ENCODE measurements at regions of chr22 and their contacts with region 1.

Region 1: DNA sequence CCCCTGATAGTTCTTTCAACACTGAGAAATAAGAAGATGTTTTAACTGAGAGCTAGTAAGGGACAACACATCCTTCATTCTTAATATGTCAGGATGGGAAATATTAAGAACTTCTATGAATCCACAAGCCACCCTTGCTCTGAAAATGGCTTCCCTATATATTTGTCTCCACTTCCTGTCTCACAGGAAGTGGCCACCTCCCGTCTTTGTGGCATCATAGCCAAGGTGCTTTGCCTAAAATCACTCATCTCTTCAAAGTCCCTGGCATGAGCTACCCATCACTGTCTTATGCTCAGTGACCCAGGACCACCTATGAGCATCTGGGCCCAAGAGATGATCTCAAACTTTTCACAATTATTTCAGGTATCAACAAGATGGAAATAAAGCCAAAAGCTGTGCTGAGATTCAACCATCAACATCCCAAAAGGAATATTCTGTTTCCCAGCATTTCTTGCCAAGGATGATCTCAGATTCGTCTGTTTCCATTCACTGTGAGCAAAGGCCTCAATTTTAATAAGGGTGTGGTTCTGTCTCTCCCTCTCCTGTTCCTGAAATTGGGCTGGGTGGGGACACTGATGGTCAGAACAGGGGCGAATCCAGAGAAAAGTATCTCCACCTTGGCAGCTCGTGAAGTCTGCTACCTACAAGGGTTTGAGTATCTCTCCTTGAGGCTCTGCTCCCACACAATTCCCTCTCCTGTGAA is 493.9 kb downstream of the MN1 start:
- DNase-seq: no peak
- H3K4me3 ChIP-seq: no peak overlapping the region
- H3K27ac ChIP-seq: no peak overlapping the region
- H3K4me1 ChIP-seq: no peaks in the 10 kb centered on the region
- H3K27me3 ChIP-seq: no peaks in the 10 kb centered on the region
- CTCF ChIP-seq: no peak

Region 2: GRCh38 chr22:27296091-27296675 is 11.5 kb before region 1 on chr22:
- CTCF ChIA-PET with region 1: no interaction called
- dilution Hi-C with region 1: no loop called
- in situ Hi-C with region 1: no loop called
- intact Hi-C with region 1: no loop called
- DNase-seq: no peak
- H3K4me3 ChIP-seq: no peak overlapping the region
- H3K27ac ChIP-seq: no peak overlapping the region
- H3K4me1 ChIP-seq: no peaks in the 10 kb centered on the region
- H3K27me3 ChIP-seq: no peaks in the 10 kb centered on the region
- CTCF ChIP-seq: no peak

Region 3: DNA sequence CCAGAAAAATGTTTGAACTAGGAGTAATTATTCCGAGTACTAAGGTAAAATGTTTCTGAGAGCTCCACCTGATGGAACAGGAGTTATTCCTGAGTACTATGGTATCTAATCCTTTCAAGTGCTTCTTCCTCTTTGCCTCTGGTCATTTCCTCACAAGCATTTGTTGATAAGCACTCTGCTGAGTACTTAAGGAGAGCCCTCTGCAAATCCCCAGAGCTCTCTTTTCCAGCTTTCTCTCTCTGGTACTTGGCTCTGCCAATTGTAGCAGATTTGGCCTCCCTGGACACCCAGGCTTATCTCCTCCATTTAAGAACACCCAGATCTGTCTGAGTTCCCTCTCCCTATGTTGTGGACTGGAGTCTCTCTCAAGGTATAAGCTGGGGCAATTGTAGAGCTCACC is 36.9 kb after region 1 on chr22:
- CTCF ChIA-PET with region 1: no interaction called
- dilution Hi-C with region 1: loop called (anchors 5 kb)
- in situ Hi-C with region 1: no loop called
- intact Hi-C with region 1: no loop called
- DNase-seq: no peak
- H3K4me3 ChIP-seq: no peak overlapping the region
- H3K27ac ChIP-seq: no peak overlapping the region
- H3K4me1 ChIP-seq: no peaks in the 10 kb centered on the region
- H3K27me3 ChIP-seq: no peaks in the 10 kb centered on the region
- CTCF ChIP-seq: no peak

Measured in mammary epithelial cell (primary cell).